PC-3 (cell line): ENCODE measurements at regions of chr3 and their contacts with region 1.

Region 1: DNA sequence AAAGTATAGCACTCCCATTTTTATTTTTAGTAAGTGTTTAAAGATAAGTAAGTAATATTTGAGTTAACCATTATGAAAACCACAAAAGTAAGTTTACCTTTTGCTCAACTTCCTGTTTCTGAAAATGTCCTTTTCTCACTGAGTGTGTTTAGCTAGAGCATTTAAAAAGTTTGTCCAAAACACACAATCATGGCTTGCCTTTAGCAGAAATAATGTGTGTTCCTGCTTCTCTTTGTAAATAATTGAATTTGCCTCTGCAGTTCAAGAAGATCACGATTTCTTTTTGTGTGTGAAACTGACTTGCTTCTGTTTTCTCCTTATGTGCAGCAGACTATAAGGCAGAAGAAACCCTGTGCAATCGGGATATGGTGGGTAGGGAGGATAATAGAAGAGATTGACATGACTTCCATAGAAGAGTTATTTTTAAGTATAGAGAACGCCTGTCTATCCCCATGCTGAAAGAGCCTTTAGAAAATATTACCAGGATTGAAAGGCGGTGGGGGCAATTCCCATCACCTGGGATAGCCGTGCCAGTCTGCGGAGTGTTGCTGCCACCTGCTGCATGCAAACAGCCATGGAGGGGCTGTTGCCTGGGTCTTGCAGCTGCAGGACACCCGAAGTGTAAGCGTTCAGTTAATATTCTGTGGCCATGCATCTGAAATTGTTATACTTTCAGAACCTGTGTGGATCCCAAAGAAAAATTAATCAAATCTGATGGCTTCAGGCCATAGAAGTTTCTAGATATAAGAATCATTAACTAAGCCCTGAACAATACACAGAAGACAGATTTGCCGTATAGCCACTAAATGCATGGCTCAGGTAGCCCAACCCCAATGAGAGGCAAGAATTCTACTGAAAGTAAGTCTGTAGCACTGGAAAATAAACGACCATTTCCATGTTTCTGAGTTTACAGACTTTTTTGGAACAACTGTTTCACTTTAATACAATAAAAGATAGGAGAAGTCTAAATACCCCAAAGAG is 2.4 kb upstream of the CD96 start:
- DNase-seq: peak; percentile 89
- ATAC-seq: peak; percentile 81
- H3K4me3 ChIP-seq: peak overlapping the region; percentile 49
- H3K27ac ChIP-seq: peak overlapping the region; percentile 82
- H3K4me1 ChIP-seq: peaks cover 32% of the 10 kb centered on the region
- H3K27me3 ChIP-seq: no peaks in the 10 kb centered on the region
- CTCF ChIP-seq: peak; percentile 99

Region 2: DNA sequence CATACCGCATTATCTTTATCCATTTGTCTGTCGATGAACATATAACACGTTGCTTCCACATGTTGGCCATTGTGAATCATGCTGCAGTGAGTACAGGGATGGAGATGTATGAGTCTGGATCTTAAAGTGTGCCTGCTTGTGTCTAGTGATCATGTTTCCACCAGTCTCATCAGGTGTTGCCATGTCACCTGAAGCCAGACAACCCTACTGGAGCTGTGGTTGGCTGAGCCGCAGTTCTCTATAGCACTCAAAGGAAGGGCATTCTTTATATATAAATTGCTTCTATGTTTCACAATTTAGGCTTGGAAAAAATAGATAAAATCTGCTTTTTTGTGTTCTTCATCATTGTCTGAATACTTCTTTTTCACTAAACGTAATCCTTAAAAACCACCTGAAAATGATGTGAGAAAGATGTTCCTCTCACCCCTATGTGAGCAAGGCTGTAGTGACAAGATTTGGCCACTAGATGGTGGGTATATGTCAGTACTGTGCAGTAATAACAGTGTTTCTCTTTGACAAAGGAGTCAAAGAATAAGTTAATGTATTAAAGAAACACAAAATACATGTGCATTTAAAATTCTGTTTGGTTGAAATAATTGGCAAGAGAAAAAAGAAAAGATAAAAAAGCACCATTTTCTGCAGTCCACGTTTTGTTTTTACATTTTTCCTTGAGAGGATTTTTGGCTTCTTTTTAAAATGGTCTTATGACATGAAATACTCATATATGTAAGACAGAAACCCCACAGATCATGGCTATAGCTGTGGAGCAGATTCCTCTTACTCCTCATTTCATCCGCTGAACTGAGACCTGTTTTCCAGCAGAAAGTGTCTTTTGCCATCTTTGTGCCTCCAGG is 1807.8 kb before region 1 on chr3:
- CTCF ChIA-PET with region 1: no interaction called
- POLR2A ChIA-PET with region 1: no interaction called
- intact Hi-C with region 1: loop called (anchors 1 kb)
- DNase-seq: peak; percentile 84
- ATAC-seq: peak; percentile 85
- H3K4me3 ChIP-seq: no peak overlapping the region
- H3K27ac ChIP-seq: no peak overlapping the region
- H3K4me1 ChIP-seq: no peaks in the 10 kb centered on the region
- H3K27me3 ChIP-seq: no peaks in the 10 kb centered on the region
- CTCF ChIP-seq: peak; percentile 93

Region 3: GRCh38 chr3:110814170-110815007 is 725.3 kb before region 1 on chr3:
- CTCF ChIA-PET with region 1: no interaction called
- POLR2A ChIA-PET with region 1: no interaction called
- intact Hi-C with region 1: loop called (anchors 1 kb)
- DNase-seq: peak; percentile 92
- ATAC-seq: peak; percentile 93
- H3K4me3 ChIP-seq: peak overlapping the region; percentile 4; the same call in 1 of the 2 replicates
- H3K27ac ChIP-seq: peak overlapping the region; percentile 94
- H3K4me1 ChIP-seq: peaks cover 53% of the 10 kb centered on the region
- H3K27me3 ChIP-seq: no peaks in the 10 kb centered on the region
- CTCF ChIP-seq: no peak

Region 4: GRCh38 chr3:111080413-111080812 is 459.2 kb before region 1 on chr3:
- CTCF ChIA-PET with region 1: interaction called, 5 read pairs
- POLR2A ChIA-PET with region 1: no interaction called
- intact Hi-C with region 1: loop called (anchors 1 kb)
- DNase-seq: peak; percentile 70
- ATAC-seq: peak; percentile 61
- H3K4me3 ChIP-seq: no peak overlapping the region
- H3K27ac ChIP-seq: no peak overlapping the region
- H3K4me1 ChIP-seq: peaks cover 9% of the 10 kb centered on the region
- H3K27me3 ChIP-seq: no peaks in the 10 kb centered on the region
- CTCF ChIP-seq: peak; percentile 75

Region 5: GRCh38 chr3:111277226-111277625 is 262.4 kb before region 1 on chr3:
- CTCF ChIA-PET with region 1: interaction called, 9 read pairs
- POLR2A ChIA-PET with region 1: no interaction called
- intact Hi-C with region 1: loop called (anchors 1 kb)
- DNase-seq: peak; percentile 37
- ATAC-seq: peak; percentile 37; the same call in 1 of the 2 replicates
- H3K4me3 ChIP-seq: no peak overlapping the region
- H3K27ac ChIP-seq: no peak overlapping the region
- H3K4me1 ChIP-seq: no peaks in the 10 kb centered on the region
- H3K27me3 ChIP-seq: no peaks in the 10 kb centered on the region
- CTCF ChIP-seq: peak; percentile 51; the same call in 1 of the 2 replicates

Region 6: GRCh38 chr3:111373861-111374260 is 165.8 kb before region 1 on chr3:
- CTCF ChIA-PET with region 1: no interaction called
- POLR2A ChIA-PET with region 1: no interaction called
- intact Hi-C with region 1: loop called (anchors 1 kb)
- DNase-seq: peak; percentile 22
- ATAC-seq: no peak
- H3K4me3 ChIP-seq: no peak overlapping the region
- H3K27ac ChIP-seq: no peak overlapping the region
- H3K4me1 ChIP-seq: no peaks in the 10 kb centered on the region
- H3K27me3 ChIP-seq: no peaks in the 10 kb centered on the region
- CTCF ChIP-seq: no peak

Region 7: DNA sequence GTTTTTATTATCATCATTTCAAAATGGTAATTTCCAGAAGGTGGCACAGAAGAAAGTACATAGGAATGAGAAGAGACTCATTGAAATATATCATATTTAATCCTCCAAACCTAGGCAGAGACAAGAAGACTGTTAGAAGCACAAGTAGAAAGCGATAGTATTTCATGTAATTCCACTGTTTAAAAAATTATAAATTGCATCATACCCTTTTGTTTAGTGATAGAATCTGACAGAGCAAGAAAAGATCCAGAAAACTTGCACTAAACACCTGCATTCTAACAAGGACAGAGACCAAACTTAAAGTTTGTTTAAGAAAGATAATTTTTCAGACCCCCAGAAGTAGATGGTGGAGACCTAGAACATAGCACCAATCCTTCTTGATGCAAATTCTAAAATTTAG is 54.6 kb before region 1 on chr3:
- CTCF ChIA-PET with region 1: no interaction called
- POLR2A ChIA-PET with region 1: no interaction called
- intact Hi-C with region 1: loop called (anchors 2 kb)
- DNase-seq: no peak
- ATAC-seq: no peak
- H3K4me3 ChIP-seq: no peak overlapping the region
- H3K27ac ChIP-seq: no peak overlapping the region
- H3K4me1 ChIP-seq: no peaks in the 10 kb centered on the region
- H3K27me3 ChIP-seq: no peaks in the 10 kb centered on the region
- CTCF ChIP-seq: no peak

Region 8: DNA sequence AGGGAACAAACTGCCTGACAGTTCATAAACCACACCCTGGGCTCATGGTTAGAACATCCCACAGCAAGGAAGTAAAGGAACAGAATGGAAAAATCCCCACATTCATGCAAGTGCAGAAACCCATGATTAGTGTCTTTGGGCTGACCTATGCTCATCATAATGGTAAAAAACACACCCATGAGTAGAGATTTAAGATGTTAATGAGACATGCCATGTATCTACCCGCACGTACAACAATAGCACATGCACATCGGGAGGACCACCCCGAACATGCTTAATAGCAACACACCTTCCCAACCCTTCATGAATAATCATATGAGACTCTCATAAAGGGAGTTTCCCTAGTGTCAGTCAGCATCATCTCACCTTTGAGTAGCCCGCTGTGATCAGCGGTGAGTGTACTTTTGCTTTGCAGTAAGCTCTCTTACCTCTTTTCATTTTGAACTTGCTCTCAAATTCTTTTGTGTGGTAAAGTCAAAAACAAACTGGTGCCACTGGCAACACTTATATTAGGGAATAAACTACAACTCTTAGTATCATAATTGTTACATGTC is 32.3 kb after region 1 on chr3:
- CTCF ChIA-PET with region 1: no interaction called
- POLR2A ChIA-PET with region 1: no interaction called
- intact Hi-C with region 1: no loop called
- DNase-seq: no peak
- ATAC-seq: no peak
- H3K4me3 ChIP-seq: no peak overlapping the region
- H3K27ac ChIP-seq: no peak overlapping the region
- H3K4me1 ChIP-seq: no peaks in the 10 kb centered on the region
- H3K27me3 ChIP-seq: no peaks in the 10 kb centered on the region
- CTCF ChIP-seq: no peak